ENCODE measurements at regions of chr17 and their contacts with region 1.

Region 1: GRCh38 chr17:60599620-60600489 is at the start of gene PPM1D:
- DNase-seq: peak; percentile 99

Region 2: GRCh38 chr17:60525685-60526514 is 74.0 kb before region 1 on chr17 and contains the start of gene APPBP2:
- CTCF ChIA-PET with region 1: interaction called, 4 read pairs
- POLR2A ChIA-PET with region 1: interaction called, 17 read pairs
- DNase-seq: peak; percentile 91

Region 3: DNA sequence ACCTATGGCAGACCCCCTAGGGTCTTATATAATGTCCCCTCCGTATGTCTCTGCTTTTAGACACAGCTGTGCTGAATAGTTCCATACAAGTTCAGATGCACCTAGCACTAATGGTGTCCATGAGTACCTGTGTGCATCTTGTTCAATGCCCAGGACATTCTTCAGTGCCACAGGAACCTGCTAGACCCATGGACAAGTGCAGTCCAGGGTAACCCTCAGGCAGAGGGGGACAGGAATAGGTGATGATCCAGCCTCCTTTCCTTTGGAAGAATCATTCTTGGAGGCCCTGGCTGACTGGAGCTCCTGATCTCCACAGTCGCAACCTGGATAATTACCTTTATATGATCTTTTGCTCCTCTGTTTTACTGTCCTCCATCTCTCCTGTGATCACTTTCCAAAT is 28.3 kb before region 1 on chr17:
- CTCF ChIA-PET with region 1: interaction called, 5 read pairs
- POLR2A ChIA-PET with region 1: interaction called, 17 read pairs
- DNase-seq: no peak

Region 4: GRCh38 chr17:60577147-60577915 is 22.5 kb before region 1 on chr17:
- CTCF ChIA-PET with region 1: interaction called, 3 read pairs
- POLR2A ChIA-PET with region 1: interaction called, 17 read pairs
- DNase-seq: no peak

Region 5: DNA sequence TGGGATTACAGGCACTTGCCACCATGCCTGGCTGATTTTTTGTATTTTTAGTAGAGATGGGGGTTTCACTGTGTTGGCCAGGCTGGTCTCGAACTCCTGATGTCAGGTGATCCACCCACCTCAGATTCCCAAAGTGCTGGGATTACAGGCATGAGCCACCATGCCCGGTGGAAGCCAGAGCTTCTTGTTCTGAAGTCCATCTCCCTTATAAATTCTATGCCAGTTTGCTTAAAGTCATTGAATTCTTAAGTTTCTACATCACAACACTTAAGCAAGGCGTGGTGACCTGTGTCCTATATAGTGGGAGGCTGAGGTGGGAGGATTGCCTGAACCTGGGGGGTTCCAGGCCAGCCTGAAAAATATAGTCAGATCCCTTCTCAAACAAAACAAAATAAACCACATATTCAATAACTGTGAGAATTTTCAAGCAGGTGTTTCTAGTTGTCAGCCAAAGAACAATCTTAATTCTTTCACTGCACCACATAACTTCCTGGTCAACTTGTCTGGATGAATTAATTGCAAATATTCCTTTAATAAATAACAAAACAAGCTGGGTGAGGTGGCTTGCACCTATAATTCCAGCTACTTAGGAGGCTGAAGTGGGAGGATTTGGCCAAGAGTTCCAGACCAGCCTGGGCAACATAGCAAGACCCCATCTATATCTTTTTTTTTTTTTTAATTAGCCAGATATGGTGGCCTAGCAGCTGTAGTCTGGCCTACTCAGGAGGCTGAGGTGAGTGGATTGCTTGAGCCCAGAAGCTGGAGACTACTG is 17.0 kb before region 1 on chr17:
- CTCF ChIA-PET with region 1: no interaction called
- POLR2A ChIA-PET with region 1: interaction called, 17 read pairs
- DNase-seq: no peak

Region 6: DNA sequence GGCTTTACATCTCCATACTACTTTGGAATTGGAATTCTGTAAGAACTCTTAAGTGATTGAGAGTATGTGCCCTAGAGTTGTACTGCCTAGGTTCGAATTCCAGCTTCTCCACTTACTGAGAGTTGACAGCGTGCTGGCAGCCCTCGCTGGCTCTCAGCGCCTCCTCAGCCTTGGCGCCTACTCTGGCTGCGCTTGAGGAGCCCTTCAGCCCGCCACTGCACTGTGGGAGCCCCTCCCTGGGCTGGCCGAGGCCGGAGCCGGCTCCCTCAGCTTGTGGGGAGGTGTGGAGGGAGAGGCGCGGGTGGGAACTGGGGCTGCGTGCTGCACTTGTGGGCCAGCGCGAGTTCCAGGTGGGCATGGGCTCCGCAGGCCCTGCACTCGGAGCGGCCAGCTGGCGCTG is 13.5 kb after region 1 on chr17:
- CTCF ChIA-PET with region 1: interaction called, 5 read pairs
- POLR2A ChIA-PET with region 1: interaction called, 17 read pairs
- DNase-seq: no peak

Region 7: DNA sequence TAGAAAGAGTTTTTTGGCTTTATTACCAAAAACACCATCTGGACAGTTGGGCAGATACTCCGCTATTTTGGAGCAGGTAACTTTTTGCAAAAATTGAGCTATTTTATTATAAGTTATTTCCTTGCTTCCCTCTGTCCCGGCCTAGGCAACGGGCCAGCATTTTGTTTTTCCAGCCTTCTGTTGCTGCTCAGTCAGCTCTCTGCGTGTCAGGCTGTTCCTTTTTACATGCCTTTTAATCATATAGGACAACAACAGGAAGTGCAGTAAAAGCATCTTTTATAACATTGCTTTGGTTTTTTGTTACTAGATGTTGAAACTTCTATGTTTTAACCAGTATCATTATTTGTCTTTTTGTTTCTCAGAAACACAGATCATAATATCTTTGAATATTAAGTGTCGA is 30.5 kb after region 1 on chr17:
- CTCF ChIA-PET with region 1: no interaction called
- POLR2A ChIA-PET with region 1: interaction called, 11 read pairs
- DNase-seq: no peak